Activated CD4-positive, alpha-beta T cell treated with anti-CD3 and anti-CD28 coated beads for 36 hours (primary cell): ENCODE measurements at regions of chr2 and their contacts with region 1.

Region 1: GRCh38 chr2:202290970-202291369 is 25.4 kb downstream of the NOP58 start:
- DNase-seq: no peak
- ATAC-seq: no peak
- H3K4me3 Mint-ChIP-seq: no peak overlapping the region
- H3K27ac Mint-ChIP-seq: peak overlapping the region; percentile 47
- H3K4me1 Mint-ChIP-seq: peaks cover 25% of the 10 kb centered on the region
- H3K27me3 Mint-ChIP-seq: no peaks in the 10 kb centered on the region

Region 2: DNA sequence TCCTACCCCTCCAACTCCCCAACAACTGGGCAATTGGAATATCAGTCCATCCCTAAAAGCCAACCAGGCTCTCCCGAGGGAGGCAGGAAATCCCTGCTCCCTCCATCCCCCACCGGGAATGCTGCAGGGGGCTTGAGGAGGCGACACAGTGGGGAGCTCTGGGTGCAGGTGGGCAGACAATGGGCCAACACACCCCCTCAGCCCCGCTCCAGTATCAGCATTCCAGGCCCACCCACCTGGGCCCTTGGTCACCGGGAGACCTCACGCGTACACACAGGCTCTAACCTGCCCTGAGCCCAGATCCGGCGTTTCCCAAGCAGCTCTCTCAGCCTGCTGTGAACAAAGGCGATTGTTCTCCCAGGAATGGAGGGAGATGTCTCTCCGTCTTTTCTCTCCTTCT is 295.0 kb before region 1 on chr2:
- CTCF ChIA-PET with region 1: no interaction called
- POLR2A ChIA-PET with region 1: no interaction called
- intact Hi-C with region 1: no loop called
- DNase-seq: no peak
- ATAC-seq: no peak
- H3K4me3 Mint-ChIP-seq: no peak overlapping the region
- H3K27ac Mint-ChIP-seq: no peak overlapping the region
- H3K4me1 Mint-ChIP-seq: no peaks in the 10 kb centered on the region
- H3K27me3 Mint-ChIP-seq: no peaks in the 10 kb centered on the region

Region 3: DNA sequence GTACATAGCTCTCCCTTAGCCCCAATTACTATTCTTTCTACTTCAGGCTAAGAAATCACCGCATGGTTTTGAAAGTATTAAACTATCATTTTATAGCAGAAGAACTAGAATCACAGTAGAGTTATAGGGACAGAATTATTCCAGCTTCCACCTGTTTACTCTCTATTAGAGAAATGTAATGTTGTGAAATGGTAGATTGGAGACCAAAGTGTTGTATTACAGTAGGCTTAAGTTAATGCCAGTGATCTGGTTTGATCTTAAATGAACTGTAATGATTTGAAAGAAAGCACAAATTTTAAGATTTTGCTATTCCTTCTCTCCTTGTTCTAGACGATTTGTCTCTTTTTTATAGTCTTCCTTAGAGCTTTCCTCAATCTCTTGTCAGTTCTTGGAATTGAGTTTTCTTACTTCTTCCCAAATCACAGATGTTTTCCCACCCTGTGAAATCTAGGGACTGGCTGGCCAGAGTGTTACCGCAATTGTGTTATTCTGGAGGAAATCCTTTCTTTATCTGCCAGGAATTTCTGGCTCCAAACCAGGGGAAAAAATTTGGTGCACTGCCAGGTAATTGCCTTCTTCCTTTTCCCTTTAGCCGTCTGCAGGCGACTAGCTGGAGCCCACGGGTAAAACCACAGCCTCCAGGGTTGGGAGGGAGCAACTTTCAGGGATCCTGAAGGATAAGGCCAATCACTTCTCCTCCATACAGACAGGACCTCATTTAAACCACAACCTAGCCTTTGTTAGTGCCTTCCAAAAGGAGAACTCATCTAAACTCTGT is 26.3 kb after region 1 on chr2:
- CTCF ChIA-PET with region 1: no interaction called
- POLR2A ChIA-PET with region 1: interaction called, 10 read pairs
- intact Hi-C with region 1: no loop called
- DNase-seq: no peak
- ATAC-seq: no peak
- H3K4me3 Mint-ChIP-seq: no peak overlapping the region
- H3K27ac Mint-ChIP-seq: no peak overlapping the region
- H3K4me1 Mint-ChIP-seq: no peaks in the 10 kb centered on the region
- H3K27me3 Mint-ChIP-seq: no peaks in the 10 kb centered on the region

Region 4: GRCh38 chr2:202555356-202555755 is 264.4 kb after region 1 on chr2:
- CTCF ChIA-PET with region 1: no interaction called
- POLR2A ChIA-PET with region 1: no interaction called
- intact Hi-C with region 1: no loop called
- DNase-seq: peak; percentile 33
- ATAC-seq: no peak
- H3K4me3 Mint-ChIP-seq: no peak overlapping the region
- H3K27ac Mint-ChIP-seq: no peak overlapping the region
- H3K4me1 Mint-ChIP-seq: no peaks in the 10 kb centered on the region
- H3K27me3 Mint-ChIP-seq: no peaks in the 10 kb centered on the region

Region 5: GRCh38 chr2:202624133-202624532 is 333.2 kb after region 1 on chr2:
- CTCF ChIA-PET with region 1: no interaction called
- POLR2A ChIA-PET with region 1: no interaction called
- intact Hi-C with region 1: no loop called
- DNase-seq: no peak
- ATAC-seq: no peak
- H3K4me3 Mint-ChIP-seq: no peak overlapping the region
- H3K27ac Mint-ChIP-seq: no peak overlapping the region
- H3K4me1 Mint-ChIP-seq: no peaks in the 10 kb centered on the region
- H3K27me3 Mint-ChIP-seq: no peaks in the 10 kb centered on the region

Region 6: GRCh38 chr2:202976809-202977208 is 685.8 kb after region 1 on chr2:
- CTCF ChIA-PET with region 1: no interaction called
- POLR2A ChIA-PET with region 1: no interaction called
- intact Hi-C with region 1: no loop called
- DNase-seq: no peak
- ATAC-seq: no peak
- H3K4me3 Mint-ChIP-seq: no peak overlapping the region
- H3K27ac Mint-ChIP-seq: no peak overlapping the region
- H3K4me1 Mint-ChIP-seq: no peaks in the 10 kb centered on the region
- H3K27me3 Mint-ChIP-seq: no peaks in the 10 kb centered on the region